Sciatic nerve (tissue), 2 donors: ENCODE measurements at regions of chr2 and their contacts with region 1.

Region 1: GRCh38 chr2:234795272-234795920 is 156.4 kb upstream of the SH3BP4 start:
- DNase-seq: no peak
- ATAC-seq: no peak

Region 2: GRCh38 chr2:233650981-233651380 is 1144.4 kb before region 1 on chr2:
- intact Hi-C with region 1: loop called (anchors 5 kb)
- DNase-seq: no peak
- ATAC-seq: no peak

Region 3: DNA sequence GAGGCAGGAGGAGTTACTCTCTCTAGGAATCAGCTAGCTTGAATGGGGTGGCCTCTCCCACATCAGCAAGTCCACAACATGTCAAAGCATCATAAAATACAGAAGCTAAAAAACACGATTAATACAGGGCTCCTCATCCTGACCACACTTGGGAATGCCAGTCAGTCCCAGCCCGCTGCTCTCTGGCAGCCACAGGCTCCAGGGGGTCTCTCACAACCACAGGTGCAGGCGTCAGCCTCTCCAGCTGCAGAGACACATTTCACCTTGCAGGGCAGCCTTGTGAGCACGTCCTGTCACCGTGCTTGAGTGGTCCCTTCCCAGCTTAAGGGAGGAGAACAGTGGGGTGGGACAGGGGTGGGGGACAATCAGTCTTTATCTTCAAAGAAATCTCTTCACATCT is 19.0 kb after region 1 on chr2:
- intact Hi-C with region 1: no loop called
- DNase-seq: no peak
- ATAC-seq: no peak

Region 4: GRCh38 chr2:235077046-235077445 is 281.6 kb after region 1 on chr2:
- intact Hi-C with region 1: loop called (anchors 5 kb)
- DNase-seq: no peak
- ATAC-seq: no peak

Region 5: GRCh38 chr2:235149240-235149659 is 353.9 kb after region 1 on chr2:
- intact Hi-C with region 1: no loop called
- DNase-seq: peak; percentile 39
- ATAC-seq: peak; percentile 68